ENCODE measurements at regions of chr3 and their contacts with region 1.

Region 1: DNA sequence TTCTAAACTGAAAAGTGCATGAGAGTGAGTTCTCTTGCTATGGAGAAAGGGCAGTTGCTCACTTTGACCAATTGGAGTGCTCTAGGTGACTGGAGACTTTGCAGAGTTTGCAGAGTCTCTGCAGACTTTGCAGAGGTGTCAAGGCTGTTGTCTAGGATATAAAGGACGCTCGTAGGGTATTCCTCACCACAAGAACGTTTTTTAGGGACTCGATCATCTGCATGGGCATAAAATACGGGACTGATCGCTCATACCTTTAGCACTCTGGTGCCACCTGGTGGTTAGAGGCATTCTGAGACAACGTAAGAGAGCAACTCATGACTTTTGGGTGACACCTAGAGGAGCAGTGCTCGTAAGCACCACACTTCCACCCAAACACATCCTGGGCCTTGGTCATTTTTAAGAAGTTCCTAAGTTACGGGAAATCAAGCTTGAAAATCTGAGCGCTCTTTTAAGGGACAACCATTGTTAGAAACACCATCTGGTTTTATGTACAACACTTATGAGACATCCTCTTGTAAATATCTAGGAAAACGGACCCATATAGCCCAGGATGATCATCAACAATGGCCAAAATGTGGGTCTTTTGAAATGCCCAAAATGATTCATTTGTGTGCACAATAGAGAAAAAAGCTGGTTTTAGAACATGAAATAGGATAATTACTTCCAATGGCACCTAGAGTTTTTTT is 51.6 kb upstream of the XCR1 start:
- DNase-seq: peak; percentile 78 to 94 (median 91)
- ATAC-seq: peak; percentile 99
- H3K4me3 ChIP-seq: no peak overlapping the region
- H3K4me3 Mint-ChIP-seq: no peak overlapping the region
- H3K27ac ChIP-seq: no peak overlapping the region
- H3K27ac Mint-ChIP-seq: no peak overlapping the region
- H3K4me1 ChIP-seq: peaks cover 6% of the 10 kb centered on the region
- H3K4me1 Mint-ChIP-seq: peaks cover 14% of the 10 kb centered on the region
- H3K27me3 ChIP-seq: no peaks in the 10 kb centered on the region
- H3K27me3 Mint-ChIP-seq: no peaks in the 10 kb centered on the region
- CTCF ChIP-seq: peak; percentile 99

Region 2: DNA sequence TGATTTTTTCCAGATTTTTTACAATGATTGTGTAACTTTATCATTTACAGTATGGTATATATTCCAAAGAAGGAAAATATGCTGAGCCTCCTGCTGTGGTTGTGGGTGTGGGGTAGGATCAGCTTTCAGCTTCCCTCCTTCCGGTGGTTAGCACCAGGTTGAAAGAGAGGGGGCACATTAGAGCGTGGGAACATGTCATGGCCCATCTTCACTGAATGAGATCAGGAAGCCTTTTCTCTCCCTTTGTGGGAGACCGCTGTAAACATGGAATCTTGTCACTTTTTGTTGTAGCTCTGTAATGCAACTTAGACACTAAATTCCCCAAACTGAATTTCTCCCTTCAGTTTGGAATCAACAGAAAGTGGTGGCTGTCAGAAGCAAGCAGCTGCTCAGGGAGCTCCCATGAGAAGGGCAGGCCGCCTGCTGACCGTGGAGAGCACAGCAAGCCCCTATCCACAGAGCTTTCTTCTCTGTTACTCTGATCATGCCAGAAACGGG is 571.0 kb before region 1 on chr3:
- CTCF ChIA-PET with region 1: interaction called, 3 read pairs
- POLR2A ChIA-PET with region 1: no interaction called
- intact Hi-C with region 1: loop called in 1 of 2 experiments (anchors 5 kb)
- DNase-seq: peak in 2 of 9 experiments; percentile 9 to 20
- ATAC-seq: peak; percentile 42
- H3K4me3 ChIP-seq: no peak overlapping the region
- H3K4me3 Mint-ChIP-seq: no peak overlapping the region
- H3K27ac ChIP-seq: no peak overlapping the region
- H3K27ac Mint-ChIP-seq: no peak overlapping the region
- H3K4me1 ChIP-seq: peaks cover 12% of the 10 kb centered on the region
- H3K4me1 Mint-ChIP-seq: peaks cover 8% of the 10 kb centered on the region
- H3K27me3 ChIP-seq: no peaks in the 10 kb centered on the region
- H3K27me3 Mint-ChIP-seq: no peaks in the 10 kb centered on the region
- CTCF ChIP-seq: no peak

Region 3: DNA sequence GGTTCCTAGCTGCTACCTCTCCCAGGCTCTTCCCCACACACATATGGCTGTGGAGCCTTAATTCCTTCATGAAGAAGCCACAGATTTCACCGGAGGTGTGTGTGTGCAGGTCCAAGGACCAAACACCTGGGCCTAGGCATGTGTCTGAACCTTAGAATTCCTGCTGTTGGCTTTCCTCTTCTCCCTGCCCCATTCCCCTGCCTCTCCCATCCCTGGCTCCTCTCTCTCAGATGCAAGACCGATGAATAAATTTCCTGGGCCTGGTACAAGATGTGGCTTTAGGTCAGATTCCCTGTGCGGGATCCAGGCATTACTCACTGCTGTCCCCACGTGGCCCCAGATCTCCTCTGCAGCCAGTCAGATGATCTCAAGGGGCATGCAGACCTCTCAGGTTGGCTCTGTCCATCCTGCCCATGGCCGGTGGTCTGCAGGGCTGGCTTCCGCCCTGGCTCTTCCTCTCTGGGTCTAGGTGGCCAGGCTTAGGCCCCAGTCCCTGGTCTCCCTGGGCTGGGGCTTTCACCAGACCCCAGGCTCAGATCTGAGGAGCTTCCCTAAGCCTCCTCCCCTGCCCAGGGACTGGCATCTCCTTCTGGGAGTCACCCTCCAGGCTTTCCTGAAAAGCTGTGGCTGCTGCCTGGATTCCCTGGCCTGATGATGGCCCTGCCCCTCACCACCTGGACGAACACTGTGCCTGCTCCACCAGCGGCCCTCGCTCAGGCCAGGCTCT is 172.0 kb before region 1 on chr3:
- CTCF ChIA-PET with region 1: interaction called, 13 read pairs
- POLR2A ChIA-PET with region 1: no interaction called
- intact Hi-C with region 1: no loop called
- DNase-seq: no peak
- ATAC-seq: no peak
- H3K4me3 ChIP-seq: no peak overlapping the region
- H3K4me3 Mint-ChIP-seq: no peak overlapping the region
- H3K27ac ChIP-seq: no peak overlapping the region
- H3K27ac Mint-ChIP-seq: no peak overlapping the region
- H3K4me1 ChIP-seq: peaks cover 15% of the 10 kb centered on the region
- H3K4me1 Mint-ChIP-seq: peaks cover 40% of the 10 kb centered on the region
- H3K27me3 ChIP-seq: no peaks in the 10 kb centered on the region
- H3K27me3 Mint-ChIP-seq: no peaks in the 10 kb centered on the region
- CTCF ChIP-seq: no peak

Region 4: GRCh38 chr3:45938864-45939263 is 140.0 kb before region 1 on chr3:
- CTCF ChIA-PET with region 1: interaction called, 499 read pairs
- POLR2A ChIA-PET with region 1: interaction called, 15 read pairs
- intact Hi-C with region 1: loop called (anchors 1 kb)
- DNase-seq: peak; percentile 72 to 93 (median 86)
- ATAC-seq: peak; percentile 66
- H3K4me3 ChIP-seq: no peak overlapping the region
- H3K4me3 Mint-ChIP-seq: no peak overlapping the region
- H3K27ac ChIP-seq: no peak overlapping the region
- H3K27ac Mint-ChIP-seq: no peak overlapping the region
- H3K4me1 ChIP-seq: peaks cover 27% of the 10 kb centered on the region
- H3K4me1 Mint-ChIP-seq: peaks cover 39% of the 10 kb centered on the region
- H3K27me3 ChIP-seq: no peaks in the 10 kb centered on the region
- H3K27me3 Mint-ChIP-seq: no peaks in the 10 kb centered on the region
- CTCF ChIP-seq: peak; percentile 63

Region 5: GRCh38 chr3:45978006-45978761 is 100.7 kb before region 1 on chr3:
- CTCF ChIA-PET with region 1: interaction called, 55 read pairs
- POLR2A ChIA-PET with region 1: interaction called, 3 read pairs
- intact Hi-C with region 1: no loop called
- DNase-seq: peak in 7 of 9 experiments; percentile 29 to 66 (median 57)
- ATAC-seq: no peak
- H3K4me3 ChIP-seq: no peak overlapping the region
- H3K4me3 Mint-ChIP-seq: peak overlapping the region; percentile 47
- H3K27ac ChIP-seq: peak overlapping the region in 1 of 2 experiments; percentile 60
- H3K27ac Mint-ChIP-seq: peak overlapping the region; percentile 93
- H3K4me1 ChIP-seq: peaks cover 46% of the 10 kb centered on the region
- H3K4me1 Mint-ChIP-seq: peaks cover 76% of the 10 kb centered on the region
- H3K27me3 ChIP-seq: no peaks in the 10 kb centered on the region
- H3K27me3 Mint-ChIP-seq: no peaks in the 10 kb centered on the region
- CTCF ChIP-seq: no peak

Region 6: DNA sequence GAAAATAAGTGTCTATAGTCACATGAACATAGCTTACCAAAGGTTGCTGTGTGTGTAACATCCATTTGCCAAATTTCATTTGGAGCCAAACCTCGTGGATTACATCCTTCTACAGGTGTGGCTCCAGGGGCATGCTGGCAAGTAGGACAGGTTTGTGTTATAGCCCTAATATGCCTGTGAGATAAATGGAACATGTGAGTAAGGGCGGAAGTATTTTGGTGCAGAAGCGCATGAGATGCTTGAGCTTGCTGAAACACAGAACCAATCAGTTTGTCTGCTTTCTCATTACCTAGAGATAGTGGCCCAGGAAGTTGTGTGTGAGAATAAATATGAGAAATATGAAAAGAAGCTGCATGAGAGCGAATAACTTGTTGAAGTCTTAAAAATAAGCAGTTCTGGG is 29.7 kb before region 1 on chr3:
- CTCF ChIA-PET with region 1: interaction called, 39 read pairs
- POLR2A ChIA-PET with region 1: interaction called, 4 read pairs
- intact Hi-C with region 1: loop called (anchors 1 to 2 kb)
- DNase-seq: no peak
- ATAC-seq: no peak
- H3K4me3 ChIP-seq: no peak overlapping the region
- H3K4me3 Mint-ChIP-seq: no peak overlapping the region
- H3K27ac ChIP-seq: no peak overlapping the region
- H3K27ac Mint-ChIP-seq: no peak overlapping the region
- H3K4me1 ChIP-seq: peaks cover 22% of the 10 kb centered on the region
- H3K4me1 Mint-ChIP-seq: peaks cover 37% of the 10 kb centered on the region
- H3K27me3 ChIP-seq: no peaks in the 10 kb centered on the region
- H3K27me3 Mint-ChIP-seq: no peaks in the 10 kb centered on the region
- CTCF ChIP-seq: no peak

Region 7: GRCh38 chr3:46098319-46098761 is 19.5 kb after region 1 on chr3:
- CTCF ChIA-PET with region 1: interaction called, 50 read pairs
- POLR2A ChIA-PET with region 1: no interaction called
- intact Hi-C with region 1: no loop called
- DNase-seq: peak in 8 of 9 experiments; percentile 19 to 70 (median 43)
- ATAC-seq: peak; percentile 75
- H3K4me3 ChIP-seq: no peak overlapping the region
- H3K4me3 Mint-ChIP-seq: peak overlapping the region; percentile 63
- H3K27ac ChIP-seq: peak overlapping the region; percentile 3 to 89
- H3K27ac Mint-ChIP-seq: peak overlapping the region; percentile 72
- H3K4me1 ChIP-seq: peaks cover 27% of the 10 kb centered on the region
- H3K4me1 Mint-ChIP-seq: peaks cover 48% of the 10 kb centered on the region
- H3K27me3 ChIP-seq: no peaks in the 10 kb centered on the region
- H3K27me3 Mint-ChIP-seq: no peaks in the 10 kb centered on the region
- CTCF ChIP-seq: no peak